Activated CD4-positive, alpha-beta T cell treated with anti-CD3 and anti-CD28 coated beads, Interleukin-2, amount 10 ng/mL, durations not matched to agents 7 days and 5 days (primary cell): ENCODE measurements at regions of chr7 and their contacts with region 1.

Region 1: DNA sequence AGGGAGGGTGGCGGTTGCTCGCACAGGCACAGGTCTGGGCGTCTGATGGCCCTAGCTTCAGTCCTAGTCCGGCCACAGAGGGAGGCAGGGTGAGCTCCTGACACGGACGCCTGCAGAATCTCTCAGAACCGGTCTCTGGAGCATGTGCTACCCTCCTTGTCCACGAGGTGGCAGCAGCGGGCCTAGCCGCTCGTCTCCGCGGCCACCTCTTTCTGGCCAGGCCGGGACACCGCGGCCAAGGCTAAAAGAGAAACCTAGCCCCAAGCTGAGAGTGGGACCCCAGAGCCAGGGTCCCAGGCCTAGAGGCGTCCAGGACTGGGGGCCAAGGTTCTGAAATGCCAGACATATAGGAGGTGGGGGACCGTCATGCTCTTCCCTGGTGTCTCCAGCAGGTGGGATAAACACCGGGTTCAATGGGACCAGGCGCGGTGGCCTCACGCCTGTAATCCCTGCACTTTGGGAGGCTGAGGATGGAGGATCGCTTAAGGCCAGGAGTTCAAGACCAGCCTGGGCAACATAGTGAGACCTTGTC is 3.2 kb upstream of the LAT2 start:
- DNase-seq: peak; percentile 80
- H3K4me3 Mint-ChIP-seq: peak overlapping the region; percentile 10
- H3K27ac Mint-ChIP-seq: no peak overlapping the region
- H3K4me1 Mint-ChIP-seq: peaks cover 36% of the 10 kb centered on the region
- H3K27me3 Mint-ChIP-seq: no peaks in the 10 kb centered on the region

Region 2: GRCh38 chr7:74068393-74069085 is 138.1 kb before region 1 on chr7:
- CTCF ChIA-PET with region 1: interaction called, 10 read pairs
- POLR2A ChIA-PET with region 1: no interaction called
- DNase-seq: no peak
- H3K4me3 Mint-ChIP-seq: no peak overlapping the region
- H3K27ac Mint-ChIP-seq: no peak overlapping the region
- H3K4me1 Mint-ChIP-seq: no peaks in the 10 kb centered on the region
- H3K27me3 Mint-ChIP-seq: no peaks in the 10 kb centered on the region

Region 3: DNA sequence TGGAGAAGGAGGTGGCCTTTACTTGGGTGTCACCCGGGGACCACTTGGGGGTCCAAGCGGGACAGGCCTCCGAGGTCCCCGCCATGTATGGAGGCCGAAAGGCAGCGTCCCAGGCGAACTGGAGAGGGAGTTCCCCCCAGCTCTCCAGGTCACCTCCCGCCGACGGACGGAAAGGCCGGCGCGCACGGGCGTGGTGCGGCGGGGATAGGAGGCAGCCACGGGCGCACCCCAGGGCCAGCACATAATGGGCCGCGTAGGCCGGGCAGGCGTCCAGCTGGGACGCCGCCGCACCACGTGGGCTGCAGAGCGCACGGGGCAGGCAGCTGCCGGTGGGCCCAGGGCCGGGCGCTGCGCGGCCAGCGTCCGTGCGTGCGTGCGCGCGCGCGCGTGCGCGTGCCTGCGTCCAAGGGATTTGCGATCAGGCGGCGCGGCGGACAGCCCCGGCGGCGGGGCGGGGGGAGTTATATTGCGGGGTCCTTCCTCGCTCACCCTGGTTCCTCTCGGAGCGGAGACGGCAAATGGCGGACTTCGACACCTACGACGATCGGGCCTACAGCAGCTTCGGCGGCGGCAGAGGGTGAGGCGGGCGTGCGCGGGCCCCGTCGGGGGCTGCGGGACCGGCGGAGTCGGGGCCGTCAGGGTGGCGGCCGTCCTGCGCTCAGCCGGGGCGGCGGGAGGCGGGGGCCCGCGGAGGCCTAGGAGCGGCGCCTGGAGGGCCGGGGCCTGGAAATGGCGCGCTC is 32.6 kb before region 1 on chr7 and contains the start of gene EIF4H:
- CTCF ChIA-PET with region 1: interaction called, 12 read pairs
- POLR2A ChIA-PET with region 1: no interaction called
- DNase-seq: peak; percentile 94
- H3K4me3 Mint-ChIP-seq: peak within 1 kb of the TSS; percentile 91
- H3K27ac Mint-ChIP-seq: peak within 1 kb of the TSS; percentile 94
- H3K4me1 Mint-ChIP-seq: peaks cover 46% of the 10 kb centered on the region
- H3K27me3 Mint-ChIP-seq: no peaks in the 10 kb centered on the region
- total RNA-seq, gene EIF4H: 240 to 264 TPM

Region 4: GRCh38 chr7:74193054-74193453 is 13.6 kb before region 1 on chr7:
- CTCF ChIA-PET with region 1: interaction called, 11 read pairs
- POLR2A ChIA-PET with region 1: no interaction called
- DNase-seq: no peak
- H3K4me3 Mint-ChIP-seq: no peak overlapping the region
- H3K27ac Mint-ChIP-seq: no peak overlapping the region
- H3K4me1 Mint-ChIP-seq: peaks cover 12% of the 10 kb centered on the region
- H3K27me3 Mint-ChIP-seq: no peaks in the 10 kb centered on the region

Region 5: GRCh38 chr7:74401137-74401859 is 194.6 kb after region 1 on chr7:
- CTCF ChIA-PET with region 1: interaction called, 32 read pairs
- POLR2A ChIA-PET with region 1: interaction called, 3 read pairs
- DNase-seq: peak; percentile 73
- H3K4me3 Mint-ChIP-seq: no peak overlapping the region
- H3K27ac Mint-ChIP-seq: no peak overlapping the region
- H3K4me1 Mint-ChIP-seq: no peaks in the 10 kb centered on the region
- H3K27me3 Mint-ChIP-seq: no peaks in the 10 kb centered on the region